ENCODE measurements at regions of chr2 and their contacts with region 1.

Region 1: GRCh38 chr2:197378494-197379307 is 56.1 kb downstream of the SF3B1 start:
- DNase-seq: peak; percentile 67
- H3K4me3 Mint-ChIP-seq: no peak overlapping the region
- H3K27ac Mint-ChIP-seq: no peak overlapping the region
- H3K4me1 Mint-ChIP-seq: peaks cover 18% of the 10 kb centered on the region
- H3K27me3 Mint-ChIP-seq: no peaks in the 10 kb centered on the region
- CTCF ChIP-seq: peak; percentile 70

Region 2: GRCh38 chr2:196849895-196850294 is 528.8 kb before region 1 on chr2:
- CTCF ChIA-PET with region 1: no interaction called
- intact Hi-C with region 1: loop called (anchors 1 kb)
- DNase-seq: peak; percentile 42
- H3K4me3 Mint-ChIP-seq: no peak overlapping the region
- H3K27ac Mint-ChIP-seq: no peak overlapping the region
- H3K4me1 Mint-ChIP-seq: peaks cover 8% of the 10 kb centered on the region
- H3K27me3 Mint-ChIP-seq: no peaks in the 10 kb centered on the region
- CTCF ChIP-seq: no peak

Region 3: GRCh38 chr2:197011799-197012641 is 366.7 kb before region 1 on chr2:
- CTCF ChIA-PET with region 1: interaction called, 3 read pairs
- intact Hi-C with region 1: loop called (anchors 5 kb)
- DNase-seq: peak; percentile 24
- H3K4me3 Mint-ChIP-seq: no peak overlapping the region
- H3K27ac Mint-ChIP-seq: no peak overlapping the region
- H3K4me1 Mint-ChIP-seq: peaks cover 8% of the 10 kb centered on the region
- H3K27me3 Mint-ChIP-seq: no peaks in the 10 kb centered on the region
- CTCF ChIP-seq: peak; percentile 87

Region 4: DNA sequence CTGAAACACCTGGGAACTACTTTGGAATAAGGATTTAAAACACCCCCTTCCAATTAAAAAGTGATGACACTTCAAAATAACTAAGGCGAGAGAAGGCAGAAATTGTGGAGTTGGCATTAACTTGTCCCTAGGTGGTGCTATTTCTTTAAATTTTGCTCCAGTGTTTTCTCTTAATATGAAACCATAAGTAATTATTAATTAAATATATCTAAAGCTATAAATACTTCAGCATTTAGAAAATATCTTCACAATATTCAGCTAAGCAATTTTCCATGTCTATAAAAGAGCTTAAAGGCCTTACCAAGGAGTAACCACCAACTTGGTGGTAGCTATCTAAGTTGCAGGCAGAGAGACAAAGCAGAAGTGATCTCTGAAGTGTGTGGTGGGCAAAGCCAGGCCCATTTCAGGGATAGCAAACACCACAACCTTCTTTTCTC is 265.4 kb before region 1 on chr2:
- CTCF ChIA-PET with region 1: interaction called, 7 read pairs
- intact Hi-C with region 1: loop called (anchors 1 kb)
- DNase-seq: no peak
- H3K4me3 Mint-ChIP-seq: no peak overlapping the region
- H3K27ac Mint-ChIP-seq: no peak overlapping the region
- H3K4me1 Mint-ChIP-seq: no peaks in the 10 kb centered on the region
- H3K27me3 Mint-ChIP-seq: no peaks in the 10 kb centered on the region
- CTCF ChIP-seq: peak; percentile 67

Region 5: GRCh38 chr2:197191177-197191939 is 187.3 kb before region 1 on chr2:
- CTCF ChIA-PET with region 1: interaction called, 4 read pairs
- intact Hi-C with region 1: loop called (anchors 1 kb)
- DNase-seq: peak; percentile 18
- H3K4me3 Mint-ChIP-seq: no peak overlapping the region
- H3K27ac Mint-ChIP-seq: no peak overlapping the region
- H3K4me1 Mint-ChIP-seq: peaks cover 1% of the 10 kb centered on the region
- H3K27me3 Mint-ChIP-seq: no peaks in the 10 kb centered on the region
- CTCF ChIP-seq: peak; percentile 58

Region 6: GRCh38 chr2:197310271-197310985 is 68.3 kb before region 1 on chr2 and contains the start of gene ANKRD44:
- CTCF ChIA-PET with region 1: no interaction called
- intact Hi-C with region 1: loop called (anchors 2 kb)
- DNase-seq: peak; percentile 85
- H3K4me3 Mint-ChIP-seq: peak within 1 kb of the TSS; percentile 81
- H3K27ac Mint-ChIP-seq: peak within 1 kb of the TSS; percentile 61
- H3K4me1 Mint-ChIP-seq: peaks cover 15% of the 10 kb centered on the region
- H3K27me3 Mint-ChIP-seq: no peaks in the 10 kb centered on the region
- CTCF ChIP-seq: peak; percentile 20
- total RNA-seq, gene ANKRD44: 7.1 and 10.0 TPM in 2 replicates

Region 7: GRCh38 chr2:197399887-197400540 is 21.3 kb after region 1 on chr2:
- CTCF ChIA-PET with region 1: no interaction called
- intact Hi-C with region 1: no loop called
- DNase-seq: no peak
- H3K4me3 Mint-ChIP-seq: no peak overlapping the region
- H3K27ac Mint-ChIP-seq: no peak overlapping the region
- H3K4me1 Mint-ChIP-seq: peaks cover 11% of the 10 kb centered on the region
- H3K27me3 Mint-ChIP-seq: no peaks in the 10 kb centered on the region
- CTCF ChIP-seq: no peak

Measured in Calu3 (cell line).